Sigmoid colon (tissue), 7 donors: ENCODE measurements at regions of chr4 and their contacts with region 1.

Region 1: GRCh38 chr4:111641955-111642579 is 503.2 kb upstream of the FAM241A start:
- DNase-seq: peak; percentile 82
- H3K4me3 ChIP-seq: no peak overlapping the region
- H3K27ac ChIP-seq: no peak overlapping the region
- H3K4me1 ChIP-seq: no peaks in the 10 kb centered on the region
- H3K27me3 ChIP-seq: no peaks in the 10 kb centered on the region
- CTCF ChIP-seq: peak; percentile 78 to 85 (median 84)
- EP300 ChIP-seq: no peak
- POLR2A ChIP-seq: no peak

Region 2: GRCh38 chr4:111761531-111761930 is 119.5 kb after region 1 on chr4:
- intact Hi-C with region 1: no loop called
- DNase-seq: no peak
- H3K4me3 ChIP-seq: no peak overlapping the region
- H3K27ac ChIP-seq: peak overlapping the region in 2 of 4 donors; percentile 14 to 48
- H3K4me1 ChIP-seq: peaks cover 0 to 22% (median 13%) of the 10 kb centered on the region in 4 donors
- H3K27me3 ChIP-seq: no peaks in the 10 kb centered on the region
- CTCF ChIP-seq: no peak
- EP300 ChIP-seq: no peak
- POLR2A ChIP-seq: no peak

Region 3: GRCh38 chr4:111778543-111778942 is 136.5 kb after region 1 on chr4:
- intact Hi-C with region 1: loop called (anchors 2 kb)
- DNase-seq: no peak
- H3K4me3 ChIP-seq: no peak overlapping the region
- H3K27ac ChIP-seq: no peak overlapping the region
- H3K4me1 ChIP-seq: peaks cover 0 to 60% (median 32%) of the 10 kb centered on the region in 4 donors
- H3K27me3 ChIP-seq: no peaks in the 10 kb centered on the region
- CTCF ChIP-seq: peak in 1 of 4 experiments; percentile 31
- EP300 ChIP-seq: no peak
- POLR2A ChIP-seq: no peak

Region 4: DNA sequence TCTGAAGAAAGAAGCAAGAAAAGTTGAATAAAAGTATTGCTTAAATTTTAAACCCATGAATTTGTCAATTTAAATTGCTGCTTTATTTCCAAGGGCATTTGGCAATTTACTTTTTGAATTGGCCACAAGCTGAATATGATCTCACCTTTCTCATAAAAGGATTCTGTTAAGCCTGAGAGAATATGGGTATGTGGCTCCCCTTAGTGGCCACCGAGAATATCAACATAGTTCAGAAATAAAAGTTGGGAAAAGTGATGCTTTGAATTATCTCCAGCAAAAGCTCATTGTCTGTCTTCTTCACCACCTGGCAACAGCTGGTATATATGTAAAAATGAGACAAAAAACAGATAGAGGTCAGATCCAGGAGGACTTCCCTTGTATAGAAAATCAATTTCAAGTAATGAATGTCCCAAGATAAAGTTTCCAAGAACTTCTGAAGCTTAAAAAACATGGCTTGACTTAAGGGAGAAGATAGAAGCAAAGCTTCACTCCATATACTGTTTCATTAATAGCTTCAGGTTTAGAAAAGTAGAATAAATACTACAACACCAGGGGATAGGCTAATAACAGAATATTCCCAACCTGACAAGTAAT is 212.5 kb after region 1 on chr4:
- intact Hi-C with region 1: loop called (anchors 1 kb)
- DNase-seq: no peak
- H3K4me3 ChIP-seq: no peak overlapping the region
- H3K27ac ChIP-seq: no peak overlapping the region
- H3K4me1 ChIP-seq: peaks cover 0 to 6% (median 0%) of the 10 kb centered on the region in 4 donors
- H3K27me3 ChIP-seq: no peaks in the 10 kb centered on the region
- CTCF ChIP-seq: peak; percentile 43 to 75 (median 60)
- EP300 ChIP-seq: no peak
- POLR2A ChIP-seq: no peak

Region 5: GRCh38 chr4:112031712-112032328 is 389.8 kb after region 1 on chr4:
- intact Hi-C with region 1: loop called (anchors 10 kb)
- DNase-seq: no peak
- H3K4me3 ChIP-seq: no peak overlapping the region
- H3K27ac ChIP-seq: no peak overlapping the region
- H3K4me1 ChIP-seq: no peaks in the 10 kb centered on the region
- H3K27me3 ChIP-seq: peaks cover 0 to 7% (median 0%) of the 10 kb centered on the region in 3 donors
- CTCF ChIP-seq: peak in 2 of 4 experiments; percentile 28 to 56
- EP300 ChIP-seq: no peak
- POLR2A ChIP-seq: no peak